Dendritic cell treated with granulocyte-macrophage colony-stimulating factor and Interleukin-4, amounts not matched to agents 40 ng/mL and 50 ng/mL, for 4 days (primary cell): ENCODE measurements at regions of chr17 and their contacts with region 1.

Region 1: GRCh38 chr17:37701496-37701898 is 43.4 kb downstream of the HNF1B start:
- H3K4me3 Mint-ChIP-seq: peak overlapping the region; percentile 10
- H3K27ac Mint-ChIP-seq: no peak overlapping the region
- H3K4me1 Mint-ChIP-seq: no peaks in the 10 kb centered on the region
- H3K27me3 Mint-ChIP-seq: peaks cover 35% of the 10 kb centered on the region

Region 2: DNA sequence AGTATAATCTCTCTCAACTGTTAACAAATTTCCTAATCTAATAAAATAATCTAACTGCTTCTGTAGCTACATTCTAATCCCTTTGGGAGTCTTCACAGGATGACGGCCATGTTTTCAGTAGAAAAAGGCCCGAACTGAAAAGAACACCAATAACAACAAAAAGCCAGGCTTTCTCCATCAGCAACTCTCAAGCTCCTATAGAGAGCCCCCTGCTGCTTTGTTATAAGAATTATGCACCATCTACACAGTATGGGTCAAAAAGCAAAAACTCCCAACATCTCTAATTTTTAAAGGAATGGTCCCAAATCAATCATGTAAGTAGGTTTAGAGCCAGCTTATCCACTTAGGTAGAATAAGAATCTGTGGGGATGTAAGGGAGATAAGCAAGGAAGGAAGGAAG is 489.3 kb before region 1 on chr17:
- intact Hi-C with region 1: no loop called
- H3K4me3 Mint-ChIP-seq: no peak overlapping the region
- H3K27ac Mint-ChIP-seq: no peak overlapping the region
- H3K4me1 Mint-ChIP-seq: no peaks in the 10 kb centered on the region
- H3K27me3 Mint-ChIP-seq: no peaks in the 10 kb centered on the region

Region 3: DNA sequence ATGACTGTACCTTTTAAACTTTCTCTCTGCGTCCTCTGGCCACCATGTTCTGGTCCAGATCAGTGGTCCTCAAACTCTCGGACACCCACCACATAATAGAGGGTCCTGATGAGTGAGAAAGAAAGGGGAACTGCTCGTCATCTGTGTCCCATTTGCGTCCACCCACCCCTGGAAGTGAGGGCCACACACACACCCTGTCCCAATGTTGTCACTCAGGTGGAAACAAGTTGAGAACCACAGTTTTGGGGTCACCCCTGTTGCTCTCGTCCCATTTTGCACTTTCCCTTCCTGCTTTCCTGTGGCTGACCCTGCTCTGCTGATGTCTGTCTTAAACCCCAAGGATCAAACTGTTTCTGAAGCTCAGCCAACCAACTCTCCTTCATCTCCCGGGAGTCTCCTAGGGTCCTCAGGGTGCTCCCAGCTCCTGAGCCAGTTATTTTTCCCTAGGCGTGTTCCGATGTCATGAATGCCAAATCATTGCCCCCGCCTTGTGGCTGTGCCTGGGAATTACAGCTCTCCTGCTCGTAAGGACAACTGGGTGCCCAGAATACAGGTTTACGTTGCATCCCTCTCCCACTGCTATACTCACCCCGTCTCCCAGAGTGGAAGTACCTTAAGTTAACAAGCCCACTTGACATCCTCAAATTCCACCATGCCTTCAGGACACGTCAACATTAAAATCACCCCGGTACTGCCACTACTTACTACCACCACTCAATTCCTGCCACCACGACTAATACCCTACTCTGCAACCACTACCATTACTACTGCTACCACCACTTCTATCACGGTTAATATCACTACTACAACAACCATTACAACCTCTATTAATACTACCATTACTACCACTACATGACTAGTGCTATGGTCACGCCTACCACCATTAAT is 69.4 kb after region 1 on chr17:
- intact Hi-C with region 1: loop called (anchors 1 kb)
- H3K4me3 Mint-ChIP-seq: no peak overlapping the region
- H3K27ac Mint-ChIP-seq: no peak overlapping the region
- H3K4me1 Mint-ChIP-seq: peaks cover 36% of the 10 kb centered on the region
- H3K27me3 Mint-ChIP-seq: peaks cover 6% of the 10 kb centered on the region

Region 4: GRCh38 chr17:37791447-37792399 is 90.2 kb after region 1 on chr17:
- intact Hi-C with region 1: loop called (anchors 1 kb)
- H3K4me3 Mint-ChIP-seq: no peak overlapping the region
- H3K27ac Mint-ChIP-seq: no peak overlapping the region
- H3K4me1 Mint-ChIP-seq: no peaks in the 10 kb centered on the region
- H3K27me3 Mint-ChIP-seq: peaks cover 11% of the 10 kb centered on the region

Region 5: DNA sequence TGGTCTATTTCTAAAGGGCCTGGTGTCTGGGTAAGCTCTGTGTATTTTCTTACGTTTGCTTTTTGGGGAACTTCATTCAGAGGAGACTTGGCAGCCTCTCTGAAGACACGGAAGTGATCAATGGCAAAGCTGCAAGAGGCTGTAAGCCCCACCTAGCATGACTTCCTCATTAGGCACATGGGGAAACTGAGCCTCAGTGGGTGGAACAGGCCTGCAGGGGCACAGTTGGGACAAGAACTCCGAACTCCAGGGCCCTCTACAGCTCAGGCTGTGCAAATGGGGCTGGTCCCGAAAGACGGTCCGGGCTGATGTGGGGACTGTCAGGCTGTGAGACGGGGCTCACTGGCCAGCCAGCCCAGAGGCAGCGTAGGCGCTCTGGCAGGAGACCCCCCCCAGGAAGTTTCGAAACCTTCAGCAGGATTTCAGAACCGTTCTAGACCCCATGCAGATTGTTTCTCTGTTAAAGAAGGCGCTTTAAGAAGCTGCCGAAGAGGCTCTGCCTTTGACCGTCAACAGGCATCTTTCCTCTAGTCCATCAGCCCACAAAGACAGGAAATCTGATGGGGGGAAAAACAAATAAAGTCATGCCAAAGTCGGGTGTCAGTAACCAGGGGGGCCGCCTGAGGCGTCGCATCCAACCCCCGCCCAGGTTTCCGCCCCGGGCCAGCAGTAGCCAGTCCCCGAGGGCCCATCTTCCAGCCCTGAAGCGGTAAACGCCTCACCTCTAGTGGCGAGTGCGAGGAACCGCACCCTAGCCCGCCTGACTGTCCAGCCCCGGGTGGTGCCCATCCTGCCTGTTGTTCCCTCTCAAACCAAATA is 142.9 kb after region 1 on chr17:
- intact Hi-C with region 1: loop called (anchors 10 kb)
- H3K4me3 Mint-ChIP-seq: peak overlapping the region; percentile 49
- H3K27ac Mint-ChIP-seq: peak overlapping the region; percentile 84
- H3K4me1 Mint-ChIP-seq: peaks cover 32% of the 10 kb centered on the region
- H3K27me3 Mint-ChIP-seq: no peaks in the 10 kb centered on the region